Activated T-helper 2 cell treated with anti-CD3 and anti-CD28 coated beads, Interferon-gamma antibody, Interleukin-2, Interleukin-4, amounts not matched to agents 10 μg/mL and 5 μg/mL and 100 μg/mL, durations not matched to agents 14 hours and 24 hours and 36 hours (primary cell): ENCODE measurements at regions of chrX and their contacts with region 1.

Region 1: GRCh38 chrX:129759576-129760061 is 20.1 kb upstream of the SASH3 start:
- DNase-seq: peak; percentile 52
- H3K4me3 Mint-ChIP-seq: no peak overlapping the region
- H3K27ac Mint-ChIP-seq: peak overlapping the region; percentile 86
- H3K4me1 Mint-ChIP-seq: peaks cover 42% of the 10 kb centered on the region
- H3K27me3 Mint-ChIP-seq: no peaks in the 10 kb centered on the region

Region 2: GRCh38 chrX:129347291-129347690 is 412.3 kb before region 1 on chrX:
- intact Hi-C with region 1: no loop called
- DNase-seq: no peak
- H3K4me3 Mint-ChIP-seq: no peak overlapping the region
- H3K27ac Mint-ChIP-seq: no peak overlapping the region
- H3K4me1 Mint-ChIP-seq: no peaks in the 10 kb centered on the region
- H3K27me3 Mint-ChIP-seq: no peaks in the 10 kb centered on the region

Region 3: GRCh38 chrX:129606918-129607317 is 152.7 kb before region 1 on chrX:
- intact Hi-C with region 1: loop called (anchors 10 kb)
- DNase-seq: peak; percentile 10
- H3K4me3 Mint-ChIP-seq: no peak overlapping the region
- H3K27ac Mint-ChIP-seq: peak overlapping the region; percentile 2
- H3K4me1 Mint-ChIP-seq: peaks cover 19% of the 10 kb centered on the region
- H3K27me3 Mint-ChIP-seq: peaks cover 3% of the 10 kb centered on the region

Region 4: DNA sequence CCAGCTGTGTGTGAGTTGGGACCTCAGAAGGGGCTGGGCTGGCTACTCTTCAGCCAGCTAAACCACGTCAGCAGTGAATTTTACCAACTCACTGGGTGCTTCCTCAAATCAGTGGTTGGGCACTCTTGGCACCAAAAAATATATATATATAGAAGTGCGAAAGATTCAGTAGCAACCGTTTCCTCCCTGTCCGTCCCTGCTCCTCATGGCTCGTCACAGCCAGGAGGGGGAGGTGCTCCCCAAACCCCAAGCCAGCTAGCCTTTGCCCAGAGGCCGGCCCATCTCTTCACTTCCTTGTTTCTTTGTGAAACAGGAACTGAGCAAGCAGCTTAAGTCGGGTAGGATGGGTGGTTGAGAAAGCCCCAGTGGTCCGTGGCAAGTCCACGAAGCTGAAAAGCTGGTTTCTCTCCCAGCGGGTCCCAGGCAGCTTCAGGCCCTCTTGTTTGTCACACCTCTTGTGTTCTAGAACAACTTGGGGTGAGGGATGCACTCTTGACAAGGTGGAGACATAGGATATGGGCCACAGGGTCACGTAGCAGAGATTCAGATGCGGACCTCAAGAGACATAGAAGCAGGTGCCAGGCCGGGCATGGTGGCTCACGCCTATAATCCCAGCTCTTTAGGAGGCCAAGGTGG is 13.3 kb after region 1 on chrX:
- intact Hi-C with region 1: loop called (anchors 1 kb)
- DNase-seq: no peak
- H3K4me3 Mint-ChIP-seq: peak overlapping the region; percentile 30
- H3K27ac Mint-ChIP-seq: peak overlapping the region; percentile 93
- H3K4me1 Mint-ChIP-seq: peaks cover 56% of the 10 kb centered on the region
- H3K27me3 Mint-ChIP-seq: no peaks in the 10 kb centered on the region

Region 5: GRCh38 chrX:129798888-129799287 is 39.3 kb after region 1 on chrX:
- intact Hi-C with region 1: loop called (anchors 5 kb)
- DNase-seq: no peak
- H3K4me3 Mint-ChIP-seq: no peak overlapping the region
- H3K27ac Mint-ChIP-seq: peak overlapping the region; percentile 51
- H3K4me1 Mint-ChIP-seq: peaks cover 21% of the 10 kb centered on the region
- H3K27me3 Mint-ChIP-seq: no peaks in the 10 kb centered on the region

Region 6: DNA sequence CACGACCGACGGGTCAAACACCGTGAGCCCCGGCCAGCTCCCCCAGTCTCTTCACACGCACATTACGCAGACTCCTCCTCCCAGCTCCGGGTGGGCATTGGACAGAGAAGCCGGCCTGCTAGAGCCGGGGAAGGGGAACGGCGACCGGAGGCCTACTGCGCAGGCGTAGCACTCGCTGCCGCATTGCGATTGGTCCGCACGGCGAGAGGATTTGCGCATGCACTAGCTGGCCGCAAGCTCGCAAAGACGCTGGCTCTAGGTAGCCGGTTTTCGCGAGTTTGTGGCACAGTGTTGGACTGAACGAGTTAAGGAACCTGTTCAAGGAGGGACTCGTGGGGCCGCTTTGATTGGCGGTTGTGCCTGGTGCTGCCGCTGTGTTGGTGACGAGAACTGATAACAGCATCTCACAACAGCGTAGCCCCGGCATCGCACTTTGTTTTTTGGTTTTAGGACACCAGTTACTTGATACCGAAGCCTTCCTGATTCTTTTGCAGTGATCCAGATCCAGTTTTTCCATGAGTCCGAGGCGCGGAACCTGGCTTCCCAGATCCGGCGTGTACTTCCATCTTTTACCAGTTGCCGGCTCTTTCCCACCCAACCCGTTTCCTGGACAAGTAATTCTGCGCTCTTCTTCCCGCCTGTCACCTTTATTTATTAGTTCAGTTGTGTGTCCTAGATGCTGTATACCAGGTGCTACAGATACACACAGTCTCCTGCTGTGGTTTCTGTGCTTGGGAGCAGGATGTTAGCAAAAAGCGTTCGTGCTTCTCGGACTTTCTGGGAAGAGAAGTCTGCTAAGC is 406.3 kb after region 1 on chrX and contains the start of gene AIFM1:
- intact Hi-C with region 1: loop called (anchors 10 kb)
- DNase-seq: peak; percentile 86
- H3K4me3 Mint-ChIP-seq: peak within 1 kb of the TSS; percentile 98
- H3K27ac Mint-ChIP-seq: peak within 1 kb of the TSS; percentile 97
- H3K4me1 Mint-ChIP-seq: peaks cover 31% of the 10 kb centered on the region
- H3K27me3 Mint-ChIP-seq: no peaks in the 10 kb centered on the region
- total RNA-seq, gene AIFM1: 48.7 and 51.1 TPM in 2 replicates